ENCODE measurements at regions of chr10 and their contacts with region 1.

Region 1: DNA sequence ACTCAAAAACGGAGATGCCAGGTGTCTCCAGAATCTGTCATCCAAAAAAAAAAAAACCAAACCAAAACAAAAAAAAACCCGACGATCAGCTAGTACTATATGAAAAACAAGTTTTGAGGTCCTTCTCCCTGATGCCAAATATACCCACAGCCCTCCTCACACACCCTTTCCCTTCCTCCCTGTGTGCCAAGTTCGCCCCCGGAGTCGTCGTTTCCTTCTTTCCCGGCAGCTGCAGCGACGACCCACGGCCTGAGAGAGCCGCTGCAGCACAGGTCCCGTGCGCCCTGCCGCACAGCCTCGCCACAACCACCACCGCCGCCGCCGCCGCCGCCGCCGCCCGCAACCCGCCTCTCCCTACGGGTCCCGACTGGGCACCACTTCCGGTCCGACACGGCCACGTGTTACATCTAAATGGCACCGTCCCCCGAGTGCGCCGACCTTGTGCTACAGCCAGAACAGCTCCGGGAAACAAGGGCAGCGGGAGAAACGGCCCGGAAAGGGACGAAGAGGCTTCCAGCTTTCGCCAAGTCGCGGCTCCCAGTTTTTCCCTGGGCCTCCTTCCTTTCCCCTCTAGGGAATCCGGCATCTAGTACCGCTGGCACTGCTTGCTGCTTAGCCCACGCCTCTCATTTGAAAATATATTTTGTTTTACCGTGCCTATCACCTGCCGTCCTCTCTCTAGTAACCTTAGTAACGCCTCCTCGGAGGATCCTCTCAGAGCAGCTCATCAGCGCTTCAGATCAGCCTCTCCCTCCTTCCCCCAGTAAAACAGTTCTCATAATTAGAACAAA is at the start of gene FRA10AC1:
- H3K4me3 ChIP-seq: peak within 1 kb of the TSS; percentile 79
- H3K27ac ChIP-seq: peak within 1 kb of the TSS; percentile 84
- H3K4me1 ChIP-seq: no peaks in the 10 kb centered on the region; the same call in 1 of the 2 replicates
- CTCF ChIP-seq: peak; percentile 97

Region 2: GRCh38 chr10:93615576-93616235 is 86.7 kb before region 1 on chr10:
- CTCF ChIA-PET with region 1: no interaction called
- POLR2A ChIA-PET with region 1: no interaction called
- H3K4me3 ChIP-seq: no peak overlapping the region
- H3K27ac ChIP-seq: no peak overlapping the region
- H3K4me1 ChIP-seq: no peaks in the 10 kb centered on the region
- CTCF ChIP-seq: no peak

Region 3: DNA sequence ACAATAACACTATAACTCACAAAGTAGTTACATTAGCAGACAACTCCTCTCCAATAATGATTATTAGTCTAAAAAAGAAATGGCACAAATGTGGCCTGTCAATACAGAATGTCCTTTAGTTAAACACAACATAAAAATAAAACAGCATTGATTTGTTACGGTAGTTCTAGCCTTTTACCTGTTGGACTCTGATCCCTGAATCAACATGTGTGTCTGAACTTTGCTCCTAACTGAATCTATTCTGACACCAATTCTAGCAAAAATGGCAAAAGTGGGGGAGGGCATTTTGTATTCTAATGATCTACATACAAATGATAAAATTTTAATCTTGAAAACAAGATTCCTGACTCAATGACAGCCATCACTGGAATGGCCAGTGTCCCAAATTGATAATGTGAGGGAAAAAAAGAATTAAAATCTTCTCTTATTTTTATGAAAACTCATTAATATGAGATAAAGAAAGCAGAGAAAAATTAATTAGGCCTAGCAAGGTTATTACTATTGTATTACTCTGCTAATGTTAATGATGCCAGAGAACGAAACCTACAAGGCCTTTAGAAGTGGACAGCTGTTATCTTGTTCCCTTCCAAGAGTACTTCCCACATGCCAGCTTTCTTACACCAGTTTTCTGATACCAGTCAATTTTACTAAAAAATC is 30.3 kb before region 1 on chr10:
- CTCF ChIA-PET with region 1: no interaction called
- POLR2A ChIA-PET with region 1: no interaction called
- H3K4me3 ChIP-seq: no peak overlapping the region
- H3K27ac ChIP-seq: no peak overlapping the region
- H3K4me1 ChIP-seq: no peaks in the 10 kb centered on the region
- CTCF ChIP-seq: no peak

Region 4: DNA sequence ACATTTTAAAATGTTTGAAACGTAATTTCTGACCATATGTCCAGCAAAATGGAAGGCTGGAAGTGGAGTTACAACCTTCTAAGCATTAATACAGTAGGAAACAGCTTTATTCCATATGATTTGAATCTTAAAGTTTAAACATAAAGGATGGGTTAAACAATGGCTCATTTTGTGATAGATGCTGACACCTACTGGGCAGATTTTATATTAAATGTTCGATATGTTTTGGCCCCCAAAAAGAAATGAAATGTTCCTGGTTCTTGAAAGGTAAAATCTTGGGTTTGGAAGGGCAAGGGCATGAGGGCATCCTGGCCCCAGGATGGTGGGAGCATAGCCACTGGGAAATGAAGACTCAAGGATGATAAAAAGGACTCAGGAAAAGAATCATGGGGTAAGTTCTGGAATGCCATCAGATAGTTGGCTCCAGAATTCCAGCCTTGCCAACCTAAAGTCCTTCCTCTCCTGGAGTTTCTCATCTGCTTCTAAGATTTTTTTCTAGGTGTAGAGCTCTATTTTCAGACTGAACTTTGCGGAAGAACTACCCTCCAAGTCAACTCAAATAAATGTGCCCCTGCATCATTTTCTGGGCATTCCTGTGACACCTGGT is 156.7 kb after region 1 on chr10:
- CTCF ChIA-PET with region 1: interaction called, 18 read pairs
- POLR2A ChIA-PET with region 1: no interaction called
- H3K4me3 ChIP-seq: no peak overlapping the region
- H3K27ac ChIP-seq: no peak overlapping the region
- H3K4me1 ChIP-seq: no peaks in the 10 kb centered on the region
- CTCF ChIP-seq: no peak

Region 5: DNA sequence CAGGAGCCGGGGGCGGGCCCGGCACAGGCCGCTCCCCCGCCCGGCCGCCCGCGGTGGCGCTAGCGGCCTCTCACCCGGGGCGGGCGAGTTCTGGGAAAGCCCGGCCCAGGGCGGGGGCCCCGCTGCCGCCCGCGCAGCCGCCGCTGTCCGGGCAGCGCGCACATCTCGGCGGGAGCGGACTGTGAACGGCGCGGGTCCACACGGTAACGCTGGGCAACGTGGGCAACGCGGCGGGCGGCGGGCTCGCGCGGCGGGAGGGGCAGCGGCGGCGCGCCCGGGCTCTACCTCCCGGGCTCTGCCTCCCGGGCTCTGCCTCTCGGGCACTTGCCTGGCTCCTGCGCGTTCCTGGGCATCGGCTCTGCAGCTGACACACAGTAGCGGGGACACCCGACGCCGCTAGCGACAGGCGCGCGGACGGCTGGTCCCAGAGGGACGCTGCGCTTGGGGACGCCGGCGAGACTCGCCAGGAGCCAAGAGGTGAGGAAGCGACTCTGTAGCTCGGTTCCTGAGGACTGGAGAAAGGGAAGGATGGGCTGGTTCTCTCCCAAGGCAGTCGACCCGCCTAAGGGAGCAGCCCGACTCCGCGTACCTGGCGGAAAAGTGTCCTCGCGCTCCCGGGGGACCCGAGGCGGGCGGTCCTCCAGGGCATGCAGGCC is 291.5 kb after region 1 on chr10 and contains the start of gene PLCE1:
- CTCF ChIA-PET with region 1: no interaction called
- POLR2A ChIA-PET with region 1: no interaction called
- H3K4me3 ChIP-seq: peak within 1 kb of the TSS; percentile 69
- H3K27ac ChIP-seq: peak within 1 kb of the TSS; percentile 68; the same call in 1 of the 2 replicates
- H3K4me1 ChIP-seq: peaks cover 24% of the 10 kb centered on the region
- CTCF ChIP-seq: no peak

Measured in HEK293 (cell line).